CD14-positive monocyte (primary cell): ENCODE measurements at regions of chr3 and their contacts with region 1.

Region 1: GRCh38 chr3:125055913-125056745 is at the start of gene HEG1:
- DNase-seq: peak; percentile 63 to 70 (median 66)
- H3K4me3 ChIP-seq: peak within 1 kb of the TSS; percentile 50 to 94 (median 88)
- H3K4me3 Mint-ChIP-seq: peak within 1 kb of the TSS; percentile 95 to 99
- H3K27ac ChIP-seq: peak within 1 kb of the TSS in 1 of 2 donors; percentile 59
- H3K27ac Mint-ChIP-seq: peak within 1 kb of the TSS; percentile 20 to 86 (median 75)
- H3K4me1 ChIP-seq: peaks cover 28 to 36% of the 10 kb centered on the region in 2 donors
- H3K4me1 Mint-ChIP-seq: peaks cover 45% of the 10 kb centered on the region
- H3K27me3 ChIP-seq: peaks cover 8 to 25% of the 10 kb centered on the region in 2 donors
- H3K27me3 Mint-ChIP-seq: peaks cover 16 to 51% (median 25%) of the 10 kb centered on the region in 3 donors
- CTCF ChIP-seq: no peak
- polyA plus RNA-seq, gene HEG1: 0.28 to 4.2 (median 0.69) TPM

Region 2: GRCh38 chr3:125003369-125003853 is 52.7 kb before region 1 on chr3:
- intact Hi-C with region 1: no loop called
- DNase-seq: no peak
- H3K4me3 ChIP-seq: no peak overlapping the region
- H3K4me3 Mint-ChIP-seq: no peak overlapping the region
- H3K27ac ChIP-seq: no peak overlapping the region
- H3K27ac Mint-ChIP-seq: no peak overlapping the region
- H3K4me1 ChIP-seq: no peaks in the 10 kb centered on the region
- H3K4me1 Mint-ChIP-seq: peaks cover 4% of the 10 kb centered on the region
- H3K27me3 ChIP-seq: no peaks in the 10 kb centered on the region
- H3K27me3 Mint-ChIP-seq: no peaks in the 10 kb centered on the region
- CTCF ChIP-seq: no peak

Region 3: GRCh38 chr3:125137352-125138033 is 81.4 kb after region 1 on chr3:
- intact Hi-C with region 1: loop called in 1 of 2 experiments (anchors 10 kb)
- DNase-seq: peak in 1 of 3 donors; percentile 32
- H3K4me3 ChIP-seq: no peak overlapping the region
- H3K4me3 Mint-ChIP-seq: no peak overlapping the region
- H3K27ac ChIP-seq: no peak overlapping the region
- H3K27ac Mint-ChIP-seq: peak overlapping the region in 2 of 7 donors; percentile 0 to 20
- H3K4me1 ChIP-seq: peaks cover 28 to 30% of the 10 kb centered on the region in 2 donors
- H3K4me1 Mint-ChIP-seq: peaks cover 33% of the 10 kb centered on the region
- H3K27me3 ChIP-seq: no peaks in the 10 kb centered on the region
- H3K27me3 Mint-ChIP-seq: peaks cover 0 to 2% (median 2%) of the 10 kb centered on the region in 3 donors
- CTCF ChIP-seq: no peak

Region 4: GRCh38 chr3:125148836-125149235 is 92.7 kb after region 1 on chr3:
- intact Hi-C with region 1: loop called in 1 of 2 experiments (anchors 5 kb)
- DNase-seq: peak in 1 of 3 donors; percentile 29
- H3K4me3 ChIP-seq: no peak overlapping the region
- H3K4me3 Mint-ChIP-seq: no peak overlapping the region
- H3K27ac ChIP-seq: peak overlapping the region; percentile 92 to 96
- H3K27ac Mint-ChIP-seq: peak overlapping the region; percentile 24 to 94 (median 86)
- H3K4me1 ChIP-seq: peaks cover 59 to 63% of the 10 kb centered on the region in 2 donors
- H3K4me1 Mint-ChIP-seq: peaks cover 60% of the 10 kb centered on the region
- H3K27me3 ChIP-seq: no peaks in the 10 kb centered on the region
- H3K27me3 Mint-ChIP-seq: peaks cover 0 to 2% (median 0%) of the 10 kb centered on the region in 3 donors
- CTCF ChIP-seq: no peak

Region 5: DNA sequence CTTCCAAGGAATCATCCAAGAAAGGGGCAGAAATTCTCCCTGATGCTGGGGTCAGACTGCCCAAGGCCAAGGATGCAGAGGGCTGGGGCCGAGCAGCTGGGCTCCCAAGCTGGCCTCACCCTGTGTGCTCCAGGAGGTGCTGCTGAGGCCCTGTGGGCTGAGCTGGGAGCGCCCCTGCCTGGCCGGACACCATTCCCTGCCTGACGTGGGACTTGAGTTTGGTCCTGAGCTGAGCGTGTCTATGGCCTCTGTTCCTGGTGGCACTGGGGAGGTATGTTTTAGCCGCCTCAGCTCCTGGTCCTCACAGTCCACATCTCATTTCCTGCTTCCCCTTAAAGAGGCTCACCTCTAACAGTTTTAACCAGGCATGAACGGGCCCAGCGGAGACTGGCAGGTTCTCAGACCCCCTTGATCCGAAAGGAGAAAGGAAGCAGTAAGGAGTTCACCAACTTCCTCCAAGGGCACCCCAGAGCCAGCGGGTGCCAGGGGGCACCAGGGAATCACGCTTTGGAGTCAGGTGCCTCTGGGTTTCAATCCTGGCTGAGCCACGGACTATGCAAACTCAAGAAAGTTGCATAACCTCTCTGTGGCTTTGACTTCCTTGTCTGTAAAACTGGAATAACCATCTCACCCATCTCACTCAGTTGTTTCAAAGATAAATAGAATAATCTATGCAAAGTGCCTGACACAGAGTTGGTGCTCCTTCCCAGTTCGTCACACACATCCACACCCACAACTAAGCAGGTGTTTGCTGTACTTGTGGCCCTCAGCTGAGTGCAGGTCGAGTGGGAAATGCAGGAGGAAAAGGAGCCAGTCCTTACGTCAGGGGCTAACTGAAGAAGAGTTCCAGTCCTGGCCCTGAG is 107.8 kb after region 1 on chr3:
- intact Hi-C with region 1: loop called in 1 of 2 experiments (anchors 5 kb)
- DNase-seq: peak; percentile 59 to 77 (median 71)
- H3K4me3 ChIP-seq: peak overlapping the region in 1 of 3 experiments; percentile 58
- H3K4me3 Mint-ChIP-seq: peak overlapping the region; percentile 56 to 72
- H3K27ac ChIP-seq: peak overlapping the region; percentile 29 to 81
- H3K27ac Mint-ChIP-seq: peak overlapping the region; percentile 50 to 89 (median 77)
- H3K4me1 ChIP-seq: peaks cover 50 to 53% of the 10 kb centered on the region in 2 donors
- H3K4me1 Mint-ChIP-seq: peaks cover 58% of the 10 kb centered on the region
- H3K27me3 ChIP-seq: no peaks in the 10 kb centered on the region
- H3K27me3 Mint-ChIP-seq: peaks cover 1 to 6% (median 2%) of the 10 kb centered on the region in 3 donors
- CTCF ChIP-seq: no peak